ENCODE measurements at regions of chr17 and their contacts with region 1.

Region 1: GRCh38 chr17:9266697-9267117 is 245.4 kb downstream of the NTN1 start:
- DNase-seq: no peak

Region 2: GRCh38 chr17:9298776-9299345 is 32.2 kb after region 1 on chr17:
- intact Hi-C with region 1: loop called (anchors 1 kb)
- DNase-seq: no peak

Measured in cardiac septum (tissue), 1 donor.